ENCODE measurements at regions of chr2 and their contacts with region 1.

Region 1: GRCh38 chr2:240650254-240650965 is 25.1 kb downstream of the GPR35 start:
- DNase-seq: peak in 2 of 10 donors; percentile 0 to 24
- H3K4me3 ChIP-seq: no peak overlapping the region
- H3K27ac ChIP-seq: no peak overlapping the region
- H3K27me3 ChIP-seq: peaks cover 0 to 20% (median 0%) of the 10 kb centered on the region in 45 donors
- CTCF ChIP-seq: no peak

Region 2: GRCh38 chr2:240060977-240061591 is 589.3 kb before region 1 on chr2:
- intact Hi-C with region 1: no loop called
- DNase-seq: peak in 1 of 10 donors; percentile 58
- H3K4me3 ChIP-seq: peak overlapping the region in 2 of 59 donors; percentile 12 to 15
- H3K27ac ChIP-seq: peak overlapping the region in 35 of 59 donors; percentile 8 to 82 (median 54)
- H3K27me3 ChIP-seq: peaks cover 0 to 9% (median 0%) of the 10 kb centered on the region in 45 donors
- CTCF ChIP-seq: peak; percentile 47 to 92 (median 71)

Region 3: DNA sequence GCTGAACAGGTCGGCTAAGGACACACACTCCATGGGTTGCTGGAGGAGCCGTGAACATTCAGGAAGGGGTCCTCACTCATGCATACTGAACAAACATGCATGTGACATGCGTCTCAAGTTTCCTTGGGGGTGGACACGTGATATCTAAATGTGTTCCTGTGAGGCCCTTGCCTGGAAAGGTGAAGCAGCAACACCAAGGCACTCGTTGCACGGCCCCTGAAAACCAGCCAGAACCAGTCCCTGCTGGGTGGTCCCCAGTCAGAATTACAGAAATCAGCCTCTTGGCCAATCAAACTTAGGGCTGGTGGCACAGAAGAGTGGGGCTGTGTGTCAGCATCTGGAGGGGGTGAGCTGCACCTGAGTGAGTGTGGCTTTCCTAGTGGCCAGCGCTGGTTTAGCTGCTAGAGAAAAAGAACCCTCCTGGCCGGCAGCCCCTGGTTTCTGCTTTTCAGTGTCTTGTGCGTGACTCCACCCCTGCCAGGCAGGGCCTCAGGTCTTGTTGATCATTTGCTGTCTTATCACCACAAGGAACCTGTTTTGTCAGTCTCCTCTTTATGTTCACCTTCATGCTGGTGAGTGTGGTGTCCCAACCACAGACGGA is 35.5 kb after region 1 on chr2:
- intact Hi-C with region 1: loop called in 1 of 2 experiments (anchors 5 kb)
- DNase-seq: no peak
- H3K4me3 ChIP-seq: no peak overlapping the region
- H3K27ac ChIP-seq: no peak overlapping the region
- H3K27me3 ChIP-seq: no peaks in the 10 kb centered on the region
- CTCF ChIP-seq: no peak